Right ventricle myocardium inferior (tissue), 1 donor: ENCODE measurements at regions of chr20 and their contacts with region 1.

Region 1: GRCh38 chr20:40251284-40251932 is 437.6 kb downstream of the MAFB start:
- DNase-seq: no peak
- ATAC-seq: peak; percentile 56

Region 2: GRCh38 chr20:40073535-40074111 is 177.8 kb before region 1 on chr20:
- intact Hi-C with region 1: no loop called
- DNase-seq: no peak
- ATAC-seq: peak; percentile 16

Region 3: GRCh38 chr20:40160097-40160550 is 91.3 kb before region 1 on chr20:
- intact Hi-C with region 1: loop called (anchors 10 kb)
- DNase-seq: no peak
- ATAC-seq: peak; percentile 81

Region 4: DNA sequence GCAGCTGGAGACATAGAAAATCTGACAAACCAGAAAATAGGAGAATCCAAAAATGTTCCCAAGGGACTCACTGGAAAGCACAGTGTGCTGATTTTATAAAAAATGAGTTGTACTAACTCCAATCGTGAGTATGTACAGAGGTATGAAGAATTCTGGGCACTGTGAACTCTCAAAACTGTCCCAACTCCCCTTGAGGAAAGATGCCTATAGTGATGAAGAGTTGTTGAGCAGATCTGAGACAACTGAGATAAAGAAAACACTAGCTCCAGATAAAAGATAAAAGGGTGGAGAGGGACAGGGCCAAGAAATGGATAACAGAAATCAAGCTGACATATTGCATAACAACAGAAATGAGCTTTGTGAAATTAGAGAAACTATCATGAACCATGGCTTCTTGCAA is 43.8 kb before region 1 on chr20:
- intact Hi-C with region 1: no loop called
- DNase-seq: no peak
- ATAC-seq: peak; percentile 95

Region 5: GRCh38 chr20:40359131-40359903 is 107.9 kb after region 1 on chr20:
- intact Hi-C with region 1: no loop called
- DNase-seq: no peak
- ATAC-seq: no peak